HEK293T (cell line): ENCODE measurements at regions of chr11 and their contacts with region 1.

Region 1: GRCh38 chr11:62108017-62108750 is 15.6 kb upstream of the INCENP start:
- DNase-seq: peak; percentile 60

Region 2: GRCh38 chr11:61871158-61871597 is 237.0 kb before region 1 on chr11:
- CTCF ChIA-PET with region 1: interaction called, 19 read pairs
- POLR2A ChIA-PET with region 1: no interaction called
- DNase-seq: peak; percentile 91

Region 3: GRCh38 chr11:61899146-61899841 is 208.9 kb before region 1 on chr11:
- CTCF ChIA-PET with region 1: interaction called, 32 read pairs
- POLR2A ChIA-PET with region 1: no interaction called
- DNase-seq: peak; percentile 95